Right ventricle myocardium superior (tissue), 1 donor: ENCODE measurements at regions of chr20 and their contacts with region 1.

Region 1: DNA sequence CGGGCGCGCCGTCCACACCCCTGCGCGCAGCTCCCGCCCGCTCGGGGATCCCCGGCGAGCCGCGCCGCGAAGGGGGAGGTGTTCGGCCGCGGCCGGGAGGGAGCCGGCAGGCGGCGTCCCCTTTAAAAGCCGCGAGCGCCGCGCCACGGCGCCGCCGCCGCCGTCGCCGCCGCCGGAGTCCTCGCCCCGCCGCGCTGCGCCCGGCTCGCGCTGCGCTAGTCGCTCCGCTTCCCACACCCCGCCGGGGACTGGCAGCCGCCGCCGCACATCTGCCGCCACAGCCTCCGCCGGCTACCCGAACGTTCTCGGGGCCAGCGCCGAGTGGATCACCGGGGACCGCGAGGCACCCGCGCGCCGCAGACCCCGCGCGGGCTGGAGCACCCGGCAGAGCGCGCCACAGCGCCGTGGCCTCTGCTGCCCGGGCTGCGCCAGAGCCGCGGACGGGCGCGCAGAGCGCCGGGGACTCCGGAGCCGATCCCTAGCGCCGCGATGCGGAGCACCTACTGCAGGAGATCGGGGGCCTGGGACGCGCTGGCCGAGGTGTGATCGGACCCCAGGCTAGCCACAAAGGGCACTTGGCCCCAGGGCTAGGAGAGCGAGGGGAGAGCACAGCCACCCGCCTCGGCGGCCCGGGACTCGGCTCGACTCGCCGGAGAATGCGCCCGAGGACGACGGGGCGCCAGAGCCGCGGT is at the start of gene BMP2:
- DNase-seq: peak; percentile 73
- ATAC-seq: peak; percentile 81
- total RNA-seq, gene BMP2: 2.5 TPM

Region 2: GRCh38 chr20:6636209-6637159 is 131.2 kb before region 1 on chr20:
- intact Hi-C with region 1: loop called (anchors 10 kb)
- DNase-seq: no peak
- ATAC-seq: peak; percentile 94

Region 3: GRCh38 chr20:6698056-6698455 is 69.6 kb before region 1 on chr20:
- intact Hi-C with region 1: no loop called
- DNase-seq: no peak
- ATAC-seq: no peak